CD8-positive, alpha-beta T cell (primary cell): ENCODE measurements at regions of chr14 and their contacts with region 1.

Region 1: DNA sequence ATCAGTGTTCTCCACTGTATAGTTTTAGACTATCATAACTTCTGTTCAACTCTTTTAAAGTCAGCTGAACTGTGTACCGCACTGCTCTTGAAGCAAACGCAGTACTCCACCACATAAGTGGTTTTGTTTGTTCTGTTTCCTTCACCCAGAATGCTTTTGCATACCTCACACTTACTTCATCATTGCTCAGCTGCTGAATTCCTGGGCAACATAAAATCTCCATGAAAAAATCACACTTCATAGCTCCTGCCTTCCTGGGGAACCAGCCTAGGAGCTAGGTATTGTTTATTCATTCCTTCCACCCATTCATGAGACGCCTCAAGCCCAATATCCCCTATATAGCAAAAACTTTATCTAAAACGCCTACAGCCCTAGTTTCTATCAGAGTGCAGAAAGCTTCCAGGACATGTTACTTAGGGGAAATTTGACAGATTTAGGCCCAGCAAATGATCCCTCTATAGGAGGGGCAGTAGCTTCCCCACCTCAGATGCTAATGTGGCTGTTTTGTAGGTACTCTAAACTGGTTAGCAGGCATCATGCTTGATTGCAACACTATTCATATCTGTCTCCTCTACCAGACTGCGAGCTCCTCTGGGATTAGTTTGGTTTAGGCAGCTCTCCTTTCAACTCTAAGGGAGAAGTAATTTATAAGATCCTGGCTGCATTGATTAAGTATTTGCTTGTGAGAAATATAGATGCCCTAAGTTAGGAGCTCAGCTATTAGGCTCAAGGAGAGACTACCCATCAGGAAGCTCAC is 44.5 kb downstream of the LRRC9 start:
- DNase-seq: peak in 2 of 9 experiments; percentile 24 to 47
- ATAC-seq: peak; percentile 34
- H3K4me3 ChIP-seq: peak overlapping the region in 1 of 2 experiments; percentile 52
- H3K4me3 Mint-ChIP-seq: peak overlapping the region; percentile 88
- H3K27ac ChIP-seq: no peak overlapping the region
- H3K27ac Mint-ChIP-seq: peak overlapping the region; percentile 95
- H3K4me1 ChIP-seq: peaks cover 12% of the 10 kb centered on the region
- H3K4me1 Mint-ChIP-seq: peaks cover 18% of the 10 kb centered on the region
- H3K27me3 ChIP-seq: no peaks in the 10 kb centered on the region
- H3K27me3 Mint-ChIP-seq: no peaks in the 10 kb centered on the region
- CTCF ChIP-seq: no peak

Region 2: DNA sequence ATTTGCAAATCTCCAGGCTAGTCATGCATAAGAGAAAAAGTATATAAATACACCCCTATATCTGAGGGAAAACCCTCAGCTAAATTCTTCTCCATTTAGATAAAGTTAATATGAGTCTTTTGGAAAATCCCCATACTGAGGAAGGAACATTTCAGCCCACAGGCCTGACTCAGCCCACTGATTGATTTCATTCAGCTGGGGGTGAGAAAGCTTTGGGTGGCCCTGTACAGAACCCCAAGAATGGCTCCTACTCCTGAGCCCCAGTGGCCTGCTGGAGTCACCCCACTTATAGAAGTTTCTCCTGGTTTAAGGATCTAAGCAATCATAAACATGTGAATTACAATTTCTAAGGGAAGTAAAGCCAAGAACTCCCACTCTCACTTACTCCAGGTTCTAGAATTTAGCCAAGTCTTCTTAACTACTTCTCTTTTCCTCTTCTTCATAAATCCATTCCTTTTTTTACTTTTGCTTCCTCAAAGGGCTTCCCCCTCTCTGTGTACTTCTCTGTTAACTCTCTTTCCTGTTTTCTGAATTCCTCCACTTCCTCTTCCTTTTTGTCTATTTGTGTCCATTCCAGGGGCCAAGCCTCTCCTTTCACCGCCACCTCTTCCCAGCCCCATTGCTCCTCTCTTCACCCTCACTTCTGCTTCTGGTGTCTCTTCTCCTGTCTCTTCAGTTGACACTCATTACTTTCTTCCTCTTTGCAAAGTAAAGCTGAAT is 114.9 kb before region 1 on chr14:
- CTCF ChIA-PET with region 1: no interaction called
- POLR2A ChIA-PET with region 1: no interaction called
- intact Hi-C with region 1: no loop called
- DNase-seq: peak in 1 of 9 experiments; percentile 11
- ATAC-seq: no peak
- H3K4me3 ChIP-seq: no peak overlapping the region
- H3K4me3 Mint-ChIP-seq: no peak overlapping the region
- H3K27ac ChIP-seq: no peak overlapping the region
- H3K27ac Mint-ChIP-seq: no peak overlapping the region
- H3K4me1 ChIP-seq: no peaks in the 10 kb centered on the region
- H3K4me1 Mint-ChIP-seq: no peaks in the 10 kb centered on the region
- H3K27me3 ChIP-seq: no peaks in the 10 kb centered on the region
- H3K27me3 Mint-ChIP-seq: peaks cover 9% of the 10 kb centered on the region
- CTCF ChIP-seq: no peak

Region 3: DNA sequence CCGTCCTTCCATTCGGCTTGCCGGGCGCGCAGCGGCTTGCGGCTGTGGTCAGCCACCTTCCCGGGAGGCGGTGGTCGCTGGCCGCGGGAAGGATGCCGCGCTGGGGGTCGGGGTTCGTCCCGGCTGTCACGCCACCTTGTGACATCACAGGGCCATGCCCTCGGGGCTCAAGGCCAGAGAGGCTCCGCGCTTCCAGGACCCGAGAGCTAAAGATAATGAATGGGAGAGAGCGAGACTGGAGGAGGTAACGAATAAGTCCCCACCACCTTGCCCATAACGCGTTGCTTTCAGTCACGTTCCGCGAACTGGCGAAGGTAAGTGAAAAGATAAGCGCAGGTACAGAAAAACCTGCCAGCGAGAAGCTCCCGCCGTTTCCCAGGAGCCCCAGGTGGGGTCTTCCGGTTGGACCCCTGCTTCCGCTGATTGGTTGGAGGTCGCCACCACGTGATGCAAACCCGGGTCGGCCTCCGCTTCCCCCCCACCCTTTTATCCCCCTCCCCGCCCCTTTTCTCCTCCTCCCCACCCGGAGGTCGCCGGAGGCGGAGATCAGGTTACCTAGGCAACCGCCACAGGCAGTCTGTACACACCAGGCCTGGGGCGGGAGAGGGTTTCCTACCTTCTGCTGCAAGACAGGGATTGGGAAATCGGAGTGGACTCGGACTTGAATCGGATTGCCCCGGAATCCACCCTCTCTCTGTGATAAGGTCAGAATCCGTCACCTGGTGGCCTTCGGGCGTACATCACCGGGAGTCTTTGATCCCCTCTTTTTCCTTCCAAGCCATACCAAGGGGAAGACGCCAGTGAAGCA is 44.7 kb before region 1 on chr14 and contains the start of gene LRRC9:
- CTCF ChIA-PET with region 1: interaction called, 5 read pairs
- POLR2A ChIA-PET with region 1: no interaction called
- intact Hi-C with region 1: loop called in 1 of 2 experiments (anchors 1 kb)
- DNase-seq: peak; percentile 4 to 72 (median 51)
- ATAC-seq: peak; percentile 57
- H3K4me3 ChIP-seq: peak within 1 kb of the TSS; percentile 43 to 72
- H3K4me3 Mint-ChIP-seq: peak within 1 kb of the TSS; percentile 77
- H3K27ac ChIP-seq: peak within 1 kb of the TSS in 1 of 2 experiments; percentile 31
- H3K27ac Mint-ChIP-seq: peak within 1 kb of the TSS; percentile 18
- H3K4me1 ChIP-seq: peaks cover 6% of the 10 kb centered on the region
- H3K4me1 Mint-ChIP-seq: peaks cover 13% of the 10 kb centered on the region
- H3K27me3 ChIP-seq: no peaks in the 10 kb centered on the region
- H3K27me3 Mint-ChIP-seq: peaks cover 19% of the 10 kb centered on the region
- CTCF ChIP-seq: no peak
- total RNA-seq, gene LRRC9: not detected

Region 4: DNA sequence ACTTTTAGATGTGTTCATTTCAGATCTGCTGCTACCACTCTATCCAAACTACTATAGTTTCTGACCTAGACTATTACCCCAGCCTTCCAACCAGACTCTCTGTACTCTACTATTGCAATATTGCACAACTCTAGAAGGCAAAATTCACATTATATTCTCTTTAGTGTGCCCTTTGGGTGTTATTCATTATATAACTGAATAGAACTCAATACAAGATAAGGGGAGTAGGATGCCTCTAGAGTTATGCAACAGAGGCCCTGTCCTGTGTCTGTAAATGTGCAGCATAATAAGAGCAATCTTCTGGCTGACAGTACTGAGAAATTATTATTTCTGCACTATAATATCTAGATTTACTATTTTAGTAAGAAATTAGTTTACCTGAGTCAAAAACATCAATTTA is 18.6 kb after region 1 on chr14:
- CTCF ChIA-PET with region 1: interaction called, 18 read pairs
- POLR2A ChIA-PET with region 1: no interaction called
- intact Hi-C with region 1: no loop called
- DNase-seq: no peak
- ATAC-seq: no peak
- H3K4me3 ChIP-seq: no peak overlapping the region
- H3K4me3 Mint-ChIP-seq: no peak overlapping the region
- H3K27ac ChIP-seq: no peak overlapping the region
- H3K27ac Mint-ChIP-seq: no peak overlapping the region
- H3K4me1 ChIP-seq: no peaks in the 10 kb centered on the region
- H3K4me1 Mint-ChIP-seq: no peaks in the 10 kb centered on the region
- H3K27me3 ChIP-seq: no peaks in the 10 kb centered on the region
- H3K27me3 Mint-ChIP-seq: peaks cover 2% of the 10 kb centered on the region
- CTCF ChIP-seq: no peak

Region 5: DNA sequence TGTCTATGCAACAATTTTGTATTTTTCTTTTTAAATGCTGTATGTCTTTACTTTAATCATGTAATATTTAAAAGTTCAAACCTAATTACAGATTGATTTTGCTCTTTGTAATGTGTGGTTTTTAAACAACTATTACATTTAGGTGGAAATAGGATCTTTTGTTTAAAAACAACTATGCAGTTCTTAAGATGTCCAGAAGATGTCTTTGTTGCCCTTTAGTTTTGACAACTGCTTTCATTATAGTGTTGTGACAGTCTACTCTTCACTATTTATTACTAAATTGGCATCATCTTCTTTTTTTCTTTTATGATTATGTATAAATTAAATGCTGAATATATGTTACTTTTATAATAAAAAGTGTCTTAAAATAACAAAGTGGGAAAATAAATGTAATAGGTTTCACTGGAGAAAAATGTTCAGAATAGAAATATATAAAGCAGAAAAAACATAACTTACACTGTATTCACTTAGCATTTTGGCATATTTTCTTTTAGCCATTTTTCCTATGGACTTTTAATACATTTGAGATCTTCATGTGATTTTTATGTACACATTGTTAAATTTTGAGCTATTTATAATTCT is 100.2 kb after region 1 on chr14:
- CTCF ChIA-PET with region 1: interaction called, 9 read pairs
- POLR2A ChIA-PET with region 1: interaction called, 3 read pairs
- intact Hi-C with region 1: loop called (anchors 1 to 10 kb)
- DNase-seq: peak in 2 of 9 experiments; percentile 53 to 66
- ATAC-seq: peak; percentile 80
- H3K4me3 ChIP-seq: no peak overlapping the region
- H3K4me3 Mint-ChIP-seq: no peak overlapping the region
- H3K27ac ChIP-seq: no peak overlapping the region
- H3K27ac Mint-ChIP-seq: no peak overlapping the region
- H3K4me1 ChIP-seq: no peaks in the 10 kb centered on the region
- H3K4me1 Mint-ChIP-seq: no peaks in the 10 kb centered on the region
- H3K27me3 ChIP-seq: no peaks in the 10 kb centered on the region
- H3K27me3 Mint-ChIP-seq: peaks cover 2% of the 10 kb centered on the region
- CTCF ChIP-seq: peak; percentile 71

Region 6: DNA sequence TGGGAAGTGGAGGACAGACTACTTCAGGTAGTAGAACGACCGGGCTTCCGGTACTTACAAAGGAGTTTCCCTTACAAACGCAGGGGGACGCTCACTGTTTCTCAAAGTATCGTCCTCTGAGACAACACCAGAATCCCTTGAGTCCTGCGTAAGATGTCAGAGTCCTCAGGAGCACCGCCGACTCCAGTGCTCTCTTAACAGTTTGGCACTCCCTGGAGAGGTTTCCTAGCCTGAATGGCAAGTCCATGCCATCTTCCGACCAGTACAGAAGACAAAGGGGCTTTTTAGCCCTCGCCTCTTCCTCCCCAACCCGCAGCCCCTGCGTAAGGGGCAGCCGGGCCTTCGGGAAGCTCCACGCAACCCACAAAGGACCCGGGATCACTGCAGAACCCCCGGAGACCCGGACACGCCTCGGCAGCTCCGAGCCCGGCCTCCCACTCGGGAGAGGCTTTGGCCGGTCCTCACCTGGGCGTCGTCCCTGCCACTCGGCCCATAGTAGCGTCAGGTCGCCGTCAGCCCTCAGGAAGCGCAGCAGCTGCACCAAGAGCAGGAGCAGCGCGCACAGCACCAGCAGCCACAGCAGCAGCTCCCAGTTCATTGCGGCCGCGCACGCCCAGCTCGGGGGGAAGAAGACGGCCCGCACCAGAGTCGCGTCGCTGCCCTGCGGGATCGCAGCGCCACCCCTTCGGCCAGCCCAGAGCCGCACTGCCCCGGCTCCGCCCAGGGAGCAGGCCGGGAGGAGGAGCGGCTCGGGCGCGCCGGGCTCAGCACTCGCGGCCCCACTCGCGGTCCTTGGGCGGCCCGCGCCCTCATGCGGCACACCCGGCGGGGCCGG is 200.5 kb after region 1 on chr14 and contains the start of gene DHRS7:
- CTCF ChIA-PET with region 1: interaction called, 24 read pairs
- POLR2A ChIA-PET with region 1: interaction called, 9 read pairs
- intact Hi-C with region 1: loop called (anchors 1 to 5 kb)
- DNase-seq: peak; percentile 28 to 89 (median 62)
- ATAC-seq: peak; percentile 70
- H3K4me3 ChIP-seq: peak within 1 kb of the TSS; percentile 68 to 88
- H3K4me3 Mint-ChIP-seq: peak within 1 kb of the TSS; percentile 99
- H3K27ac ChIP-seq: peak within 1 kb of the TSS; percentile 82 to 95
- H3K27ac Mint-ChIP-seq: peak within 1 kb of the TSS; percentile 100
- H3K4me1 ChIP-seq: peaks cover 31% of the 10 kb centered on the region
- H3K4me1 Mint-ChIP-seq: peaks cover 52% of the 10 kb centered on the region
- H3K27me3 ChIP-seq: no peaks in the 10 kb centered on the region
- H3K27me3 Mint-ChIP-seq: no peaks in the 10 kb centered on the region
- CTCF ChIP-seq: no peak
- total RNA-seq, gene DHRS7: 26.6 to 27.6 TPM

Region 7: GRCh38 chr14:60599727-60600126 is 635.3 kb after region 1 on chr14:
- CTCF ChIA-PET with region 1: no interaction called
- POLR2A ChIA-PET with region 1: no interaction called
- intact Hi-C with region 1: no loop called
- DNase-seq: no peak
- ATAC-seq: no peak
- H3K4me3 ChIP-seq: no peak overlapping the region
- H3K4me3 Mint-ChIP-seq: no peak overlapping the region
- H3K27ac ChIP-seq: no peak overlapping the region
- H3K27ac Mint-ChIP-seq: no peak overlapping the region
- H3K4me1 ChIP-seq: no peaks in the 10 kb centered on the region
- H3K4me1 Mint-ChIP-seq: no peaks in the 10 kb centered on the region
- H3K27me3 ChIP-seq: no peaks in the 10 kb centered on the region
- H3K27me3 Mint-ChIP-seq: peaks cover 26% of the 10 kb centered on the region
- CTCF ChIP-seq: no peak